Activated B cell treated with CpG ODN at 0.5 μM for 24 hours (primary cell): ENCODE measurements at regions of chr19 and their contacts with region 1.

Region 1: DNA sequence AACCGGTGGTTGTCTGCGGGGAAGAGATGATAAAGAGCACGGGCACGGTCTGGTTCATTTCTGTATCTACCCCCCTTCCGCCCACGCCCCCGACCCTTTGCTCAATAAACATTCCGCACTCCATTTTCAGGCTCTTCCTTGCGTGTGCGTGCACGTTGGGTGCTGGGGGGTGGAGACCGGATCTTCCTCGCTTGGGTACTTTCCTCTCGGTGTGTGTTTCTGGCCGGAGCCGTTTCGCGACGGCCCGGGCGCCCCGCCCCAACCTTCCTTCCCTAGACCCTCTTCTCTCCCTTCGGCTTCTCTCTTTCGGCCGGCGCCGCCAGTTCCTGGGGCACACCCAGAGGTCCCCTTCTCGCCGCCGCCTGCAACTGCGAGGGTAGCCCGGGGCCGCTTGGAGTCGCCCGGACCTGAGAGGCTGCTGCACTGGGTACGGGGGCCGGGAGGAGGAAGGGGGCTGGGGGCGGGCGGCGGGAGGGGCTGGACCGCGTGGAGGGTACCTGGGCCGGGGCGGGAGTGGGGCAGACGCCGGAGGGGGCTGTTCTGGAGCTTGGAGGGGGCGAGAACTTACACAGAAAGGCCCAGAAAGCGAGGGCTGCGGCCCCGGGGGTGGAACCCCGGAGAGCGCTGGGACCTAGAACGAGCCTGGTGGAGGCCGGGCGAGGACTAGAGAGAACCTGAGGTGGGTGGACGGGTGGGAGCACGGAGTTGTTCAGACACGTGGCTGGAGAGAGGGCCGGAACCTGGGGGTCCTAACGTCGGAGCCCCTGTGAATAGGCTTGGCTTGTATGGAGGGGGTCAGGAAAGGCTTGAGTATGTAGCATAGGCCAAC is at the start of gene ZNF581:
- DNase-seq: peak; percentile 84
- ATAC-seq: peak; percentile 51
- H3K4me3 Mint-ChIP-seq: peak within 1 kb of the TSS; percentile 86
- H3K27ac Mint-ChIP-seq: peak within 1 kb of the TSS; percentile 96
- H3K4me1 Mint-ChIP-seq: peaks cover 66% of the 10 kb centered on the region
- H3K27me3 Mint-ChIP-seq: no peaks in the 10 kb centered on the region
- CTCF ChIP-seq: no peak
- total RNA-seq, gene ZNF581: 42.7 and 46.5 TPM in 2 replicates

Region 2: GRCh38 chr19:55461259-55461973 is 182.1 kb before region 1 on chr19 and contains the start of gene ISOC2:
- CTCF ChIA-PET with region 1: no interaction called
- POLR2A ChIA-PET with region 1: no interaction called
- intact Hi-C with region 1: loop called (anchors 5 kb)
- DNase-seq: peak; percentile 100
- ATAC-seq: peak; percentile 96
- H3K4me3 Mint-ChIP-seq: peak within 1 kb of the TSS; percentile 89
- H3K27ac Mint-ChIP-seq: peak within 1 kb of the TSS; percentile 82
- H3K4me1 Mint-ChIP-seq: peaks cover 22% of the 10 kb centered on the region
- H3K27me3 Mint-ChIP-seq: no peaks in the 10 kb centered on the region
- CTCF ChIP-seq: no peak
- total RNA-seq, gene ISOC2: 28.7 and 29.0 TPM in 2 replicates

Region 3: GRCh38 chr19:55580628-55581144 is 62.9 kb before region 1 on chr19 and contains the start of gene ZNF579:
- CTCF ChIA-PET with region 1: no interaction called
- POLR2A ChIA-PET with region 1: interaction called, 3 read pairs
- intact Hi-C with region 1: loop called (anchors 2 kb)
- DNase-seq: peak; percentile 68
- ATAC-seq: peak; percentile 83
- H3K4me3 Mint-ChIP-seq: peak within 1 kb of the TSS; percentile 84
- H3K27ac Mint-ChIP-seq: peak within 1 kb of the TSS; percentile 75
- H3K4me1 Mint-ChIP-seq: peaks cover 29% of the 10 kb centered on the region
- H3K27me3 Mint-ChIP-seq: no peaks in the 10 kb centered on the region
- CTCF ChIP-seq: no peak
- total RNA-seq, gene ZNF579: 10.3 and 10.9 TPM in 2 replicates

Region 4: GRCh38 chr19:55712804-55713631 is 69.5 kb after region 1 on chr19:
- CTCF ChIA-PET with region 1: no interaction called
- POLR2A ChIA-PET with region 1: no interaction called
- intact Hi-C with region 1: no loop called
- DNase-seq: no peak
- ATAC-seq: no peak
- H3K4me3 Mint-ChIP-seq: no peak overlapping the region
- H3K27ac Mint-ChIP-seq: no peak overlapping the region
- H3K4me1 Mint-ChIP-seq: peaks cover 2% of the 10 kb centered on the region
- H3K27me3 Mint-ChIP-seq: peaks cover 11% of the 10 kb centered on the region
- CTCF ChIP-seq: no peak

Region 5: GRCh38 chr19:56133858-56134653 is 490.5 kb after region 1 on chr19:
- CTCF ChIA-PET with region 1: no interaction called
- POLR2A ChIA-PET with region 1: no interaction called
- intact Hi-C with region 1: no loop called
- DNase-seq: no peak
- ATAC-seq: peak; percentile 100
- H3K4me3 Mint-ChIP-seq: peak overlapping the region; percentile 53
- H3K27ac Mint-ChIP-seq: peak overlapping the region; percentile 76
- H3K4me1 Mint-ChIP-seq: peaks cover 9% of the 10 kb centered on the region
- H3K27me3 Mint-ChIP-seq: no peaks in the 10 kb centered on the region
- CTCF ChIP-seq: no peak